ENCODE measurements at regions of chr17 and their contacts with region 1.

Region 1: GRCh38 chr17:76121932-76122430 is 18.4 kb upstream of the EXOC7 start:
- DNase-seq: no peak
- H3K4me3 ChIP-seq: peak overlapping the region in 1 of 3 experiments; percentile 18
- H3K27ac ChIP-seq: no peak overlapping the region
- H3K4me1 ChIP-seq: no peaks in the 10 kb centered on the region
- H3K27me3 ChIP-seq: no peaks in the 10 kb centered on the region
- CTCF ChIP-seq: no peak

Region 2: DNA sequence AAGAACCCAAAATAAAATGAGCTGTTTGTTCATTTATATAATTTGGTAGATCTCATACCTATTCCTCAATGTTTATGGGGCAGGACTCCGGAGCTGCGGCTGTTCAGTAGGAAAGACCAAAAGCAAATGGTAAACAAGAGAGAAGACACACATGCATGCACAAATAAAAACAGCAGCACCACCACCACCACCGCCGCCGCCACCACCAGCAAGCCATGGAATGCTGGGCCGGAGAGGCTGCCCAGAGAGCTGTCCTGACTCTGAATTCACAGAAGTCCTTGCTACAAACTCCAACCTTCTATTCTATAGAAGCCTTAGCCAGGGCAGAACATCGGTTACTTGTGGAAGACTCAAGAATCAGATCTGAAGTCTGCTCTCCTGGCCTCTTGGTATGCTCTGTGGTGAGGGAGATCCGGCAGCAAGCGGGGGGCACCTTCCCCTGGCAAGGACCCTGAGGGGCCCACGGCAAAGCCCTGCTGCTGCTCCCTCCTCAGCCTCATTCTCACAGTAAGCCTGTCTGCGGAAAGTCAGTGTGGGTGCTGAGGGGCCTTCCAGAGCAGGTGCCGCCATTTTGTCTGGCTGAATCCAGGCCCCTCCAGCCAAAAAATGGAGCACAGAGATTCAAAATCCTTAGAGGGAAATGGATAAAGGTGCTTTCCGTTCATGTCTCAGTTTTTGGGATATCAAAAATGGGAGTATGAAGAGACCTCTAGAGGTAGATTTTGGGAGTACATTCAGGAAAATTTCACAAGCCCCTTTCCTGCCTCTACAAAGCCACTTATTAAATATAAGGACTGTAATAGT is 25.4 kb after region 1 on chr17:
- CTCF ChIA-PET with region 1: no interaction called
- dilution Hi-C with region 1: loop called (anchors 5 kb)
- in situ Hi-C with region 1: no loop called
- intact Hi-C with region 1: loop called (anchors 1 kb)
- DNase-seq: peak; percentile 11
- H3K4me3 ChIP-seq: no peak overlapping the region
- H3K27ac ChIP-seq: no peak overlapping the region
- H3K4me1 ChIP-seq: no peaks in the 10 kb centered on the region
- H3K27me3 ChIP-seq: no peaks in the 10 kb centered on the region
- CTCF ChIP-seq: peak; percentile 62 to 70

Region 3: DNA sequence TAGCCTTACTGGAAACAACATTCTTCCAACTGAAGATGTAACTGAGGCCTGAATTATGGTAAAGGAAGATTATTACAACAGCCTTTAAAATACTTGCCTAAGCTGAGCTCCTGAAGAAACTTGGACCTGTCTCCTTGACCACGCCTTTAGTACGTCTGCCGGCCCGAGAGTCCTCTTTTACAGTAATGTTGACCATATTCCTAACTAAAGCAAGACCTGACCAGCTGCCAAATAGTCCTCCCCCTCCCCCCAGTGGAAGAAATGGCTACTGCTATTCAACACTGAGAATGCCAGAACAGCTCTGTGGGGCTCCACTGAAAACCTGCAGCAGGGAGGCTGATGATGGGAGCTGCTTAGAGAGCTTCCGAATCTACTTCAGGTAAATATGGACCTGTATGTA is 31.7 kb after region 1 on chr17:
- CTCF ChIA-PET with region 1: no interaction called
- dilution Hi-C with region 1: loop called (anchors 5 kb)
- in situ Hi-C with region 1: no loop called
- intact Hi-C with region 1: no loop called
- DNase-seq: no peak
- H3K4me3 ChIP-seq: no peak overlapping the region
- H3K27ac ChIP-seq: no peak overlapping the region
- H3K4me1 ChIP-seq: no peaks in the 10 kb centered on the region
- H3K27me3 ChIP-seq: peaks cover 2% of the 10 kb centered on the region
- CTCF ChIP-seq: peak in 1 of 2 donors; percentile 29

Region 4: DNA sequence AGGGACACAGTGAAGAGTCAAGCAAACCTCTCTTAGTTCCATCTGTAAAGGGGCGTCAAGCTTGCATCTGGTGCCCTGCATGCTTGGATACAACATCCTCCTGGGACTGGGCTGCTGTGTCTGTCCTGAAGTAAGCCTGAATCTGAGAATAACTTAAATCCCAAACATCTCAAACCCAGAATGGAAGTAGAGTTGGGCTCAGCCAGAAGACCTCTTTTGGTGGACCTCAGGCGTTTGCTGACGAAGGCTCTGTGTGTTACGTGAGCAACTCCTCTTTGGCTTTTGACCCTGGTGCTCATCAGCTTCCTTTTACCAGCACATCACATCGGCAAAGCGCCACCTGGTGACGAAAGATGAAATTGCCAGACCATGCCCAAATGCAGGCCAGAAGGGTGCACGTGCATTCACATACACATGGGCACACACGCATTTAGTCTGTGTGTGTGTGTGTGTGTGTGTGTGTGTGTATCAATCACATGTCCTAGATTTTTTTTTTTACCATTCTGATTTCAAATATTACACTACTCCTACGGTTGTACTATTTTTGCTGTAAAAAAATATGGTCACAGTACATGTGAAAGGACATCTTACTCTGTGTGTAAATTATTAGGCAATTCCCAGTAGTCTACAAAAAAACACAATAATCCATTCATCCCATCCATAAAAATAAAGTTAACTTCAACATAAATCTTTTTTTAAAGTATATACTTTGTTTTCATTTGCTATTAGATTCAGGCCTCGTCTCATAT is 60.2 kb after region 1 on chr17:
- CTCF ChIA-PET with region 1: interaction called, 6 read pairs
- dilution Hi-C with region 1: no loop called
- in situ Hi-C with region 1: loop called in 1 of 2 experiments (anchors 10 kb)
- intact Hi-C with region 1: loop called (anchors 1 kb)
- DNase-seq: peak; percentile 82
- H3K4me3 ChIP-seq: no peak overlapping the region
- H3K27ac ChIP-seq: no peak overlapping the region
- H3K4me1 ChIP-seq: no peaks in the 10 kb centered on the region
- H3K27me3 ChIP-seq: no peaks in the 10 kb centered on the region
- CTCF ChIP-seq: peak; percentile 91 to 97

Region 5: GRCh38 chr17:76219670-76220383 is 97.8 kb after region 1 on chr17:
- CTCF ChIA-PET with region 1: no interaction called
- dilution Hi-C with region 1: loop called (anchors 5 kb)
- in situ Hi-C with region 1: no loop called
- intact Hi-C with region 1: no loop called
- DNase-seq: no peak
- H3K4me3 ChIP-seq: no peak overlapping the region
- H3K27ac ChIP-seq: no peak overlapping the region
- H3K4me1 ChIP-seq: no peaks in the 10 kb centered on the region
- H3K27me3 ChIP-seq: no peaks in the 10 kb centered on the region
- CTCF ChIP-seq: no peak

Region 6: DNA sequence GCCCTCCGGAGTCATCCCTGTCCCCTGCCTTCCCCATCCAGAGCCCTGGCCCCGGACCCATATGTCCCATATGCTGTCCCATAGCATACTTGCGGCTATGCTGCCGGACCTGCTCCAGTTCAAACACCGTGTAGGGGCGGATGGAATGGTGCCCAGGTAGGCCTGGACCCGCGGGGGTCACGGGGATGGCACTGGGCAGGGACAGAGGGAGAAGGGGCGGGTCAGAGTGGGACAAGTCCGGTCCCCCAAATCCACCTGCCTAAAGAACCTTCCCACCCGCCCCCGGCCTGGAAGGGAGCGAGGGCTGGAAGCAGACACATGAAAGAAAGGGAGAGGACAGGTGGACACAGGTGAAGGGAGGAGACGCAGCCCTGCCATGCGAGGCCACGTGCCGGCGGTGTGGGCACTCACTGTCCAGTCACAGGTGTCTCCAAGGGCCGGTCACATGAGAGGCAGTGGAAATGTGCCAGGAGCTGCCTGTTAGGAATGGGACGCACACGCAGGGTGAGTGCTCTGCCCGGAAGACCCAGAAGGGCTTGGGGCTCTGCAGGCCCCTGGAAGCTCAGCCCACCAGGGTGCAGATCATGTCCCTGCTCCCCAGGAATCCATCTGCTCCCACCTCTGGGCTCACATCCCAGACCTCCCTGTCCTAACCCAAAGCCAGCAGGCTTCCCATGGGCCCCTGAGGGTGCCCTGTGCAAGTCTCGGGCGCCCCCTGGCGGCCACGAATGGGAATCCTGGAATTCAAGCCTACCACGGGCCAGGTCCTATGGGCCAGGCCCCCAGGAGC is 157.2 kb after region 1 on chr17:
- CTCF ChIA-PET with region 1: interaction called, 22 read pairs
- dilution Hi-C with region 1: no loop called
- in situ Hi-C with region 1: loop called (anchors 5 kb)
- intact Hi-C with region 1: loop called (anchors 1 kb)
- DNase-seq: peak; percentile 51
- H3K4me3 ChIP-seq: no peak overlapping the region
- H3K27ac ChIP-seq: no peak overlapping the region
- H3K4me1 ChIP-seq: peaks cover 4% of the 10 kb centered on the region
- H3K27me3 ChIP-seq: no peaks in the 10 kb centered on the region
- CTCF ChIP-seq: peak; percentile 72 to 99

Region 7: GRCh38 chr17:76296186-76296585 is 174.2 kb after region 1 on chr17:
- CTCF ChIA-PET with region 1: no interaction called
- dilution Hi-C with region 1: no loop called
- in situ Hi-C with region 1: no loop called
- intact Hi-C with region 1: loop called (anchors 1 kb)
- DNase-seq: no peak
- H3K4me3 ChIP-seq: no peak overlapping the region
- H3K27ac ChIP-seq: no peak overlapping the region
- H3K4me1 ChIP-seq: no peaks in the 10 kb centered on the region
- H3K27me3 ChIP-seq: no peaks in the 10 kb centered on the region
- CTCF ChIP-seq: no peak

Measured in mammary epithelial cell (primary cell).